MCF 10A (cell line): ENCODE measurements at regions of chr1 and their contacts with region 1.

Region 1: GRCh38 chr1:234722904-234723720 is 113.1 kb upstream of the IRF2BP2 start:
- DNase-seq: peak; percentile 99
- H3K4me3 Mint-ChIP-seq: peak overlapping the region; percentile 61
- H3K27ac Mint-ChIP-seq: peak overlapping the region; percentile 96
- H3K4me1 Mint-ChIP-seq: peaks cover 77% of the 10 kb centered on the region
- H3K27me3 Mint-ChIP-seq: no peaks in the 10 kb centered on the region
- CTCF ChIP-seq: no peak

Region 2: GRCh38 chr1:234564642-234565037 is 158.5 kb before region 1 on chr1:
- CTCF ChIA-PET with region 1: no interaction called
- POLR2A ChIA-PET with region 1: interaction called, 11 read pairs
- intact Hi-C with region 1: no loop called
- DNase-seq: peak; percentile 100
- H3K4me3 Mint-ChIP-seq: no peak overlapping the region
- H3K27ac Mint-ChIP-seq: peak overlapping the region; percentile 80
- H3K4me1 Mint-ChIP-seq: peaks cover 25% of the 10 kb centered on the region
- H3K27me3 Mint-ChIP-seq: no peaks in the 10 kb centered on the region
- CTCF ChIP-seq: no peak

Region 3: DNA sequence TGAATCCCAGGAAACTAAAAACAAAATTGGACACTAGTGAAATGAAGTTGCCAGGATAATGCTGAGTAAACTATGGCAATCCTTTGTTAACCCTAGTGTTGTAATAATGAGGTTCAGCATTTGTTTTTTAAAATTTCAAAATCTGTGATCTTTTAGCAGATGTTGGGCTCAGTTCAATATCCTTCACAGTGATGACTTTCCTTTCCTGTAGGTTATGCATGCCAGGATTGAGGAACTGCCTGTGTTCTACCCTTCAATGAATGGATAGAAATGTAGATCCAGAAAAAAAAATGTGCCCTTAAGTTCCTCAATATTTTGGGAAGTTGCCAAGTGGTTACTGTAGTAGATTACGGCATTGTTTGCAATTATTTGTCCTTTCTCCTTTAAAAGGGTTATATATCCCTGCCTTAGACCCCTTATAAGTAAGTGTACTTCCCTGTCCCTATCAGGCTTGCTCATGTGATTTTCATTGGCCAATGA is 77.6 kb before region 1 on chr1:
- CTCF ChIA-PET with region 1: interaction called, 3 read pairs
- POLR2A ChIA-PET with region 1: interaction called, 19 read pairs
- intact Hi-C with region 1: no loop called
- DNase-seq: no peak
- H3K4me3 Mint-ChIP-seq: no peak overlapping the region
- H3K27ac Mint-ChIP-seq: no peak overlapping the region
- H3K4me1 Mint-ChIP-seq: peaks cover 16% of the 10 kb centered on the region
- H3K27me3 Mint-ChIP-seq: no peaks in the 10 kb centered on the region
- CTCF ChIP-seq: no peak

Region 4: DNA sequence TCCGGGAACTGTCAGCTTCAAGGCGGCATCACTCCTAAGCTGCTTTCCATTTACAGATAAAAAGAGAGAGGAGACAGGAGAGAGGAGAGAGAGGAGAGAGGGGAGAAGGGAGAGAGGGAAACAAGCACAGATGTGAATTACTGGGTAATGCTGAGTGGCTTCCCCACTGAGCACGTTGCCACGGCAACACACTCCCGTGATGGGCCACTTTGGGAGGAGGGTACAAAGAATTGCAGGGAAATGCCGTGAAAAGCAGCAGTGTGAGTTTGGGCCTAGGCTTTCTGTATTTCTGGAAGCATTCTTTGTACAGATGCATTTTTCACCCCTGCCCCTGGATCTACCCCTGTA is 14.8 kb after region 1 on chr1:
- CTCF ChIA-PET with region 1: interaction called, 8 read pairs
- POLR2A ChIA-PET with region 1: interaction called, 15 read pairs
- intact Hi-C with region 1: no loop called
- DNase-seq: no peak
- H3K4me3 Mint-ChIP-seq: no peak overlapping the region
- H3K27ac Mint-ChIP-seq: no peak overlapping the region
- H3K4me1 Mint-ChIP-seq: peaks cover 5% of the 10 kb centered on the region
- H3K27me3 Mint-ChIP-seq: no peaks in the 10 kb centered on the region
- CTCF ChIP-seq: no peak

Region 5: GRCh38 chr1:234925440-234926263 is 202.5 kb after region 1 on chr1:
- CTCF ChIA-PET with region 1: interaction called, 3 read pairs
- POLR2A ChIA-PET with region 1: interaction called, 23 read pairs
- intact Hi-C with region 1: loop called (anchors 2 kb)
- DNase-seq: peak; percentile 92
- H3K4me3 Mint-ChIP-seq: peak overlapping the region; percentile 26
- H3K27ac Mint-ChIP-seq: peak overlapping the region; percentile 83
- H3K4me1 Mint-ChIP-seq: peaks cover 20% of the 10 kb centered on the region
- H3K27me3 Mint-ChIP-seq: no peaks in the 10 kb centered on the region
- CTCF ChIP-seq: no peak

Region 6: GRCh38 chr1:235018161-235018560 is 295.0 kb after region 1 on chr1:
- CTCF ChIA-PET with region 1: no interaction called
- POLR2A ChIA-PET with region 1: interaction called, 15 read pairs
- intact Hi-C with region 1: no loop called
- DNase-seq: peak; percentile 100
- H3K4me3 Mint-ChIP-seq: no peak overlapping the region
- H3K27ac Mint-ChIP-seq: peak overlapping the region; percentile 0
- H3K4me1 Mint-ChIP-seq: peaks cover 25% of the 10 kb centered on the region
- H3K27me3 Mint-ChIP-seq: no peaks in the 10 kb centered on the region
- CTCF ChIP-seq: no peak